Pancreas (tissue), 10 donors: ENCODE measurements at regions of chr5 and their contacts with region 1.

Region 1: DNA sequence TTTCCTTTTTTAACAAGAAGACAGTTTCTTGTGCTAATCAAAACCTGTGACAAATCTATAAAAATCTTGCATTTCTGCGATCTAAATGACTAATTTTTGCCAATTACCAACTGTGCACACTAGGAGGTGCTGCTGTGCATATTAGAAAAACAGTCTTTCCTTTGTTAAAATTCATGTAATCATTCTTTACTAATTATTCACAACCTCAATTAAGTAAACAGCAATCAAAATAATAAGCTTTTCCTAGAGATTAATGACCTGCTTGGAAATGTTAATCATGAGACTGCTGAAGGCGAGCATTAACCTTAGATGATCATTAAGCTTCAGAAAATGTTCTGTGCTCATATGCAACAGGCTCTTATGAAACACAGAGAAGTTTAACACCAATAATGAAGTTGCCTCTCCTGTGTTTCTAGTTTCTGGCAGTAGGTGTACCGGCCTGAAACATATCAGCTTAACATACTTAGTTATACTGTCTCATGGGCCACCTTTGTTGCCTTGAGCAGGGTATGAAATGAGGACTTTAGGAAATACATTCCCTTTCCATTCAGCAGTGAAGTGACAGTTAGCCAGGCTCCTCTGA is 17.7 kb downstream of the RFESD start:
- DNase-seq: peak in 1 of 6 donors; percentile 38
- ATAC-seq: peak; percentile 50 to 80 (median 73)
- H3K4me3 ChIP-seq: no peak overlapping the region
- H3K27ac ChIP-seq: peak overlapping the region in 1 of 4 donors; percentile 12
- H3K4me1 ChIP-seq: peaks cover 0 to 10% (median 8%) of the 10 kb centered on the region in 3 donors
- H3K27me3 ChIP-seq: no peaks in the 10 kb centered on the region
- CTCF ChIP-seq: peak; percentile 37 to 66 (median 51)

Region 2: GRCh38 chr5:95392593-95393182 is 271.6 kb before region 1 on chr5:
- intact Hi-C with region 1: no loop called
- DNase-seq: peak in 3 of 6 donors; percentile 15 to 19 (median 16)
- ATAC-seq: peak; percentile 89 to 96 (median 94)
- H3K4me3 ChIP-seq: no peak overlapping the region
- H3K27ac ChIP-seq: no peak overlapping the region
- H3K4me1 ChIP-seq: no peaks in the 10 kb centered on the region
- H3K27me3 ChIP-seq: no peaks in the 10 kb centered on the region
- CTCF ChIP-seq: no peak

Region 3: DNA sequence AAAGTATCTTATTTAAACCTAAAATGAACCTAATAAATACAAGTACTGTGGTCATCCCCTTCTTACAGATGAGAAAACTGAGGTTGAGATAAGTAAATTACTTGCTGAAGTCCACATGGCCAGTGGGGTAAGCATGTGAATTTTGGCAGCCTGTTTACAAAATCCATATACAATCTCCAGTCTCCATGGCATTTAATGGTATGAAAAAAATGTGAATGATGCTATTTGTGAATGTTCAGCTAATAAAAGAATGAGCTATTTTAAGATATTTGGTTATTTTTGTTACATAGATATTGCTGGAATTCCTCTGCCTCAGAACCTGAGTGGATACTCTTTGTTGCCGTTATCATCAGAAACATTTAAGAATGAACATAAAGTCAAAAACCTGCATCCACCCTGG is 63.7 kb before region 1 on chr5:
- intact Hi-C with region 1: no loop called
- DNase-seq: no peak
- ATAC-seq: no peak
- H3K4me3 ChIP-seq: no peak overlapping the region
- H3K27ac ChIP-seq: no peak overlapping the region
- H3K4me1 ChIP-seq: no peaks in the 10 kb centered on the region
- H3K27me3 ChIP-seq: no peaks in the 10 kb centered on the region
- CTCF ChIP-seq: no peak

Region 4: GRCh38 chr5:95730730-95731570 is 66.7 kb after region 1 on chr5 and contains the start of gene RHOBTB3:
- intact Hi-C with region 1: loop called in 1 of 3 experiments (anchors 10 kb)
- DNase-seq: peak; percentile 90 to 96 (median 96)
- ATAC-seq: peak; percentile 71 to 80 (median 74)
- H3K4me3 ChIP-seq: peak within 1 kb of the TSS; percentile 45 to 90 (median 84)
- H3K27ac ChIP-seq: peak within 1 kb of the TSS; percentile 97 to 99 (median 98)
- H3K4me1 ChIP-seq: peaks cover 38 to 66% (median 55%) of the 10 kb centered on the region in 3 donors
- H3K27me3 ChIP-seq: no peaks in the 10 kb centered on the region
- CTCF ChIP-seq: no peak
- total RNA-seq, gene RHOBTB3: 59.6 to 190 (median 93.7) TPM